Caco-2 (cell line): ENCODE measurements at regions of chr15 and their contacts with region 1.

Region 1: DNA sequence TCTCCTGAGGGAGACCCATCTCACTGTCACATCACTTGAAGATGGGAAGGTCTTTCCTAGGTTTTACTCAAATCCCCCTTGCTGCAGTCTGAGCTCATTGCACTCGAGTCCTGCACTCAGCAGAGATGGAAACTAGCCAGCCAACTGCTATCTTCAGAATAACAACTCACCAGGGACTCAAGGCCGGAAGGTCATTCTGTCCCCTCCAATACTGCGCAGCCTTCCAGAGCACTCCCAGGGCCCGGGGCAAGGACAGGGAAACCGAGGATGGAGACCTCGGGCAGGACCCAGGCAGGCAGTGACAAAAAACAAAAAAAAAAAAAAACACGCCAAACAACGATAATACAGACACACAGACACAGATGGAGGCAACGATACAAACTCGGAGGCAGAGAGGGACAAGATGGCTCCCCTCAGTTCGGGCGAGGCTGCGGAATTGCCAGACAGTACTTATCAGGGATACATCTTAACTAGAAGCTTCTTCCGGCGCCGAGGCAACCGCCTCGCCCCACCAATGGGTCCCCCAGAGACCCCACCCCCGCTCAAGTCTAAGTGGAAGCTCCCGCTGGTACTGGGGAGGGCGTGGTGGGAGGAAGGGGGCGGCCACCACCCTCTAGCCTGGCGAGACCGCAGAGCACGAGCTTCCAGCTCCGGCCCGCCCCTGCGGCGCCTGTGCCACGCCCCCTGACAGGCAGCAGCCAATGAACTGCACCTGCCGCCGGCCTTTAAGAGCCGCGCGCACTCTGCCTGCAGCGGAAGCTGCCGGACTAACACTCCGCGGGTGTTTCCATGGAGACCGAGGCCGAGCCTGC is 7.0 kb upstream of the MAP1A start:
- DNase-seq: peak; percentile 98
- H3K4me3 ChIP-seq: peak overlapping the region; percentile 52
- H3K4me3 Mint-ChIP-seq: peak overlapping the region; percentile 99
- H3K27ac Mint-ChIP-seq: peak overlapping the region; percentile 87
- H3K4me1 ChIP-seq: peaks cover 5% of the 10 kb centered on the region; the same call in 1 of the 2 replicates
- H3K4me1 Mint-ChIP-seq: peaks cover 18% of the 10 kb centered on the region
- H3K27me3 ChIP-seq: no peaks in the 10 kb centered on the region; the same call in 1 of the 2 replicates
- H3K27me3 Mint-ChIP-seq: peaks cover 5% of the 10 kb centered on the region
- CTCF ChIP-seq: peak in 1 of 2 experiments; percentile 5

Region 2: GRCh38 chr15:43492673-43493601 is 17.5 kb before region 1 on chr15 and contains the start of gene TP53BP1:
- CTCF ChIA-PET with region 1: interaction called, 17 read pairs
- POLR2A ChIA-PET with region 1: interaction called, 14 read pairs
- intact Hi-C with region 1: no loop called
- DNase-seq: peak; percentile 94 to 96
- H3K4me3 ChIP-seq: peak within 1 kb of the TSS; percentile 49
- H3K4me3 Mint-ChIP-seq: peak within 1 kb of the TSS; percentile 88
- H3K27ac Mint-ChIP-seq: peak within 1 kb of the TSS; percentile 96
- H3K4me1 ChIP-seq: no peaks in the 10 kb centered on the region
- H3K4me1 Mint-ChIP-seq: peaks cover 14% of the 10 kb centered on the region
- H3K27me3 ChIP-seq: no peaks in the 10 kb centered on the region
- H3K27me3 Mint-ChIP-seq: no peaks in the 10 kb centered on the region
- CTCF ChIP-seq: no peak
- total RNA-seq, gene TP53BP1: 39.8 and 46.8 TPM in 2 replicates